Activated T-helper 2 cell treated with anti-CD3 and anti-CD28 coated beads, Interferon-gamma antibody, Interleukin-2, Interleukin-4, amounts not matched to agents 10 μg/mL and 5 μg/mL and 100 μg/mL, durations not matched to agents 14 hours and 24 hours and 36 hours (primary cell): ENCODE measurements at regions of chrX and their contacts with region 1.

Region 1: GRCh38 chrX:9995855-9996339 is 28.7 kb downstream of the CLDN34 start:
- DNase-seq: peak; percentile 51
- H3K4me3 Mint-ChIP-seq: peak overlapping the region; percentile 75
- H3K27ac Mint-ChIP-seq: peak overlapping the region; percentile 90
- H3K4me1 Mint-ChIP-seq: peaks cover 17% of the 10 kb centered on the region
- H3K27me3 Mint-ChIP-seq: no peaks in the 10 kb centered on the region

Region 2: GRCh38 chrX:9873952-9874351 is 121.9 kb before region 1 on chrX:
- intact Hi-C with region 1: loop called (anchors 5 kb)
- DNase-seq: peak; percentile 9
- H3K4me3 Mint-ChIP-seq: no peak overlapping the region
- H3K27ac Mint-ChIP-seq: no peak overlapping the region
- H3K4me1 Mint-ChIP-seq: peaks cover 7% of the 10 kb centered on the region
- H3K27me3 Mint-ChIP-seq: peaks cover 19% of the 10 kb centered on the region

Region 3: GRCh38 chrX:9885150-9885549 is 110.7 kb before region 1 on chrX:
- intact Hi-C with region 1: loop called (anchors 2 kb)
- DNase-seq: peak; percentile 22
- H3K4me3 Mint-ChIP-seq: no peak overlapping the region
- H3K27ac Mint-ChIP-seq: no peak overlapping the region
- H3K4me1 Mint-ChIP-seq: no peaks in the 10 kb centered on the region
- H3K27me3 Mint-ChIP-seq: peaks cover 17% of the 10 kb centered on the region

Region 4: GRCh38 chrX:10014462-10015356 is 18.8 kb after region 1 on chrX:
- intact Hi-C with region 1: loop called (anchors 2 kb)
- DNase-seq: peak; percentile 74
- H3K4me3 Mint-ChIP-seq: peak overlapping the region; percentile 66
- H3K27ac Mint-ChIP-seq: peak overlapping the region; percentile 73
- H3K4me1 Mint-ChIP-seq: peaks cover 46% of the 10 kb centered on the region
- H3K27me3 Mint-ChIP-seq: peaks cover 4% of the 10 kb centered on the region

Region 5: GRCh38 chrX:10098270-10098713 is 102.4 kb after region 1 on chrX:
- intact Hi-C with region 1: loop called (anchors 1 kb)
- DNase-seq: peak; percentile 60
- H3K4me3 Mint-ChIP-seq: peak overlapping the region; percentile 76
- H3K27ac Mint-ChIP-seq: peak overlapping the region; percentile 91
- H3K4me1 Mint-ChIP-seq: peaks cover 31% of the 10 kb centered on the region
- H3K27me3 Mint-ChIP-seq: no peaks in the 10 kb centered on the region

Region 6: GRCh38 chrX:10111364-10112148 is 115.7 kb after region 1 on chrX:
- intact Hi-C with region 1: loop called (anchors 2 kb)
- DNase-seq: peak; percentile 19
- H3K4me3 Mint-ChIP-seq: peak overlapping the region; percentile 72
- H3K27ac Mint-ChIP-seq: peak overlapping the region; percentile 97
- H3K4me1 Mint-ChIP-seq: peaks cover 42% of the 10 kb centered on the region
- H3K27me3 Mint-ChIP-seq: no peaks in the 10 kb centered on the region

Region 7: GRCh38 chrX:10119399-10119990 is 123.6 kb after region 1 on chrX:
- intact Hi-C with region 1: loop called (anchors 1 kb)
- DNase-seq: peak; percentile 48
- H3K4me3 Mint-ChIP-seq: no peak overlapping the region
- H3K27ac Mint-ChIP-seq: peak overlapping the region; percentile 6
- H3K4me1 Mint-ChIP-seq: peaks cover 13% of the 10 kb centered on the region
- H3K27me3 Mint-ChIP-seq: no peaks in the 10 kb centered on the region